Breast epithelium (tissue), 4 donors: ENCODE measurements at regions of chr5 and their contacts with region 1.

Region 1: DNA sequence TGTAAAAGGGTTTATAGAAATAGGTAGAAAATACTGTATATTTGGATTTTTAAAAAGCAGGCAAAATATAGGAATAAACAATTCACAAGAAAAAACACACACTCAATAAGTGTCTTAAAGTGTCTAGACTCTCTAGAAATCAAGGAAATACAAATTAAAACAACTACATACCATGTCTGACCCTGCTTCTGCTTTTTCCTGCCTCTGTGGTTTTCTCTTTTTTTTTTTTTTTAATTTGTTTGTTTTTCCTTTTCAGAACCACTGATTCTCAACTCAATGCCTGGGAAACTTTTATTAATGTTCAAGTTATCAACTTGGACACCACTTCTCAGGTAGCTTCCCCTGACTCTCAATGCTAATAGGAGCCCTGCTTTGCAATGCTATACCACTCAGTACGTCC is 25.5 kb upstream of the TAS2R1 start:
- DNase-seq: no peak
- H3K4me3 ChIP-seq: no peak overlapping the region
- H3K27ac ChIP-seq: no peak overlapping the region
- H3K4me1 ChIP-seq: no peaks in the 10 kb centered on the region
- H3K27me3 ChIP-seq: no peaks in the 10 kb centered on the region
- CTCF ChIP-seq: no peak
- POLR2A ChIP-seq: no peak

Region 2: DNA sequence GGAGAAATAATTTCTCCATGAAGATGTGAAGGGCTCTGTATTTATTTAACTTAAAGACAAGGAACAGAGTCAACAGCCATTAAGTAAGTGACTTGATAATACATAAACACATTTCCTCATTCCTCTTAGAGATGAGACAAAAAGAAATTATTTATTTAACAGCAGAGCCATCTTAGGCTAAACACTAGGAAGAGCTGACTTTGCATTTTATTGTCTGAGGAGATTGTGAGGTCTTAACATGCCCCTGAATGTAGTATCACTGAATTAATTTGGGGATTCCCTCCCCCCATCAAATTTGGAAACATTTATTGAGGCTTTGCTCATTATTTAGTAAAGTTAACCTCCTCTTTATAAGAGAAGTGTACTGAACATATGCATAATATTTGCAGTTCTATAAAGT is 60.7 kb before region 1 on chr5:
- intact Hi-C with region 1: loop called (anchors 2 kb)
- DNase-seq: no peak
- H3K4me3 ChIP-seq: no peak overlapping the region
- H3K27ac ChIP-seq: no peak overlapping the region
- H3K4me1 ChIP-seq: no peaks in the 10 kb centered on the region
- H3K27me3 ChIP-seq: no peaks in the 10 kb centered on the region
- CTCF ChIP-seq: no peak
- POLR2A ChIP-seq: no peak